Heart right ventricle (tissue), 16 donors: ENCODE measurements at regions of chr5 and their contacts with region 1.

Region 1: GRCh38 chr5:139690064-139690802 is 42.1 kb downstream of the CXXC5 start:
- DNase-seq: no peak
- ATAC-seq: peak in 7 of 8 donors; percentile 1 to 38 (median 32)
- H3K4me3 ChIP-seq: peak overlapping the region in 1 of 10 donors; percentile 5
- H3K27ac ChIP-seq: peak overlapping the region in 7 of 10 donors; percentile 5 to 73 (median 43)
- H3K4me1 ChIP-seq: peaks cover 17 to 85% (median 54%) of the 10 kb centered on the region in 9 donors
- H3K27me3 ChIP-seq: no peaks in the 10 kb centered on the region
- CTCF ChIP-seq: peak; percentile 22 to 79 (median 70)

Region 2: DNA sequence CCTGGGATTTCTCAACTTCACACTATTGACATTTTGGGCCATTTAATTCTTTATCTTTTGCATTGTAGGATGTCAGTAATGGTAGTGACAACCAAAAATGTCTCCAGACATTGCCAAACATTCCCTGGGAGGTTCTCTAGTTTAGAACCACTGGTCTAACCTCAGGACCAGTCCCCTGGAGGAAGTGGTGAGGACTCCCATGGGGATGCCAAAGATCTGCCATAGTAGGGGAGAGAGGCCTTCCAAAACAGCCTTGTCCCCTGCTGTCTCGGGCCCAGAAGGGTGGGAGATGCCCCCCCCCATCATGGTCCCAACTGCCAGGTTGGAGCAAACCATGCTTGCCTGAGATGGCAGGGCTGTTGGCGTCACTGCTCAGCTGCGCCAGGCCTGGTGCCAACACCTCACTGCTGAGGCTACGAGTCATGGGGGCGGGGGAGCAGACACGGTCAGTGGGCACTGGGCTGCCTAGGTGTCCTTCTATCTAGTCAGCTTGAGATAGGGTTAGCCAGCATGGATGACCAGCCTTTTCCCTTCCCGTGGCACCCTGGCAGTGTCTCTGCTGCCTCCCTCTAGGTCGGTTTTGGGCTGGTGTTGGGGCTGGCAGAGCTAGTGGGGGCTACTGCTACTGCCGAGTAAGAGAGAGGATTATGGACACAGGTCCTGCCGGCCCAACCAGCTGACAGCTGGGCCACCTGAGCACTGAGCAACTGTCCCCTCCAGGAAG is 50.5 kb before region 1 on chr5:
- intact Hi-C with region 1: loop called in 8 of 10 experiments (anchors 1 to 5 kb)
- DNase-seq: peak in 1 of 2 donors; percentile 58
- ATAC-seq: no peak
- H3K4me3 ChIP-seq: no peak overlapping the region
- H3K27ac ChIP-seq: peak overlapping the region in 1 of 10 donors; percentile 5
- H3K4me1 ChIP-seq: peaks cover 19 to 60% (median 45%) of the 10 kb centered on the region in 9 donors
- H3K27me3 ChIP-seq: no peaks in the 10 kb centered on the region
- CTCF ChIP-seq: no peak

Region 3: DNA sequence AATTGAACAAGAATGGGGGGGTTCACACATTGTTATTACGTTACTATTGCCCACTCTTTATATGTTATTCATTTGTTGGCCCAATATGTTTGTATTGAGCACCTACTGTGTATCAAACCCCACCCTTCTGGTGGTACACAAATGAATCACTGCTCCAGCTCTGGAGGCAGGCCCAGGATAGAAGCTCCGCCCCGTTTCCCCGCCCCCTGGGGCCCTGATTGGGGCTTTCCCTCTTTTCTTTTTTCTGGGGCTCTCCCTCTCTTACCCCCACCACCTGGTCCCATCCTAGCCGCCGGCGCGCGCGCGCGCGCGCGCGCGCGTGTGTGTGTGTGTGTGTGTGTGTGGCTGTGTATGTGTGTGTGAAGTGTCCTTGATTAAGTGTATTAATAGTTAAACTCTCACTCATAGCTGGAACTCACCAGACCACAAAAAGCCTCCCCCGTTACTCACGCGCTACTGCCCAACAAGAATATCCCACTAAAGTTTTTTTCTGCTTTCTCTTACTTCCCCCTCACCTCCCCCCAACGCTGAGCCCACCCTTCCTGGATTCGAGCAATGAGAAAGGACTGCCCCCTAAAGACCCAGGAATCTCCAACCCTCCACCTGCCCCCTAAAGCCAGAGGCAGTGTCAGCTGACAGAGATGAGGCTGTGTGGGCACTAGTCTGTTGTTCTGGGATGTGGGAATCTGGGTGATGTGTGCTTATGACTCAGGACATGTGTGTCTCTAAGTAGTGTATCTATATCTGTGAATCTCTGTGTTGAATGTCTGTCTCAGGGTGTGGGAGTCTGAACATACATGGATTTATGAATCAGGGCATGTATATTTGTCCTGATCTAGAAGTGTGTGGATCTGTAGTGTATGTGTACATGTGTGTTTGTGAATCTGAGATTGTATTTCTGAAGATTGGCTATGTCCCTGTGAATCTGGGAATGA is 38.1 kb before region 1 on chr5:
- intact Hi-C with region 1: loop called in 6 of 10 experiments (anchors 5 kb)
- DNase-seq: peak; percentile 78 to 81
- ATAC-seq: peak in 7 of 8 donors; percentile 9 to 46 (median 36)
- H3K4me3 ChIP-seq: peak overlapping the region in 6 of 10 donors; percentile 20 to 99 (median 96)
- H3K27ac ChIP-seq: peak overlapping the region; percentile 66 to 97 (median 92)
- H3K4me1 ChIP-seq: peaks cover 40 to 88% (median 79%) of the 10 kb centered on the region in 9 donors
- H3K27me3 ChIP-seq: peaks cover 0 to 48% (median 0%) of the 10 kb centered on the region in 7 donors
- CTCF ChIP-seq: no peak

Region 4: GRCh38 chr5:139745124-139745799 is 55.0 kb after region 1 on chr5:
- intact Hi-C with region 1: no loop called
- DNase-seq: peak in 1 of 2 donors; percentile 60
- ATAC-seq: peak in 6 of 8 donors; percentile 7 to 56 (median 27)
- H3K4me3 ChIP-seq: peak overlapping the region in 1 of 10 donors; percentile 51
- H3K27ac ChIP-seq: peak overlapping the region in 3 of 10 donors; percentile 15 to 64 (median 36)
- H3K4me1 ChIP-seq: peaks cover 8 to 43% (median 35%) of the 10 kb centered on the region in 9 donors
- H3K27me3 ChIP-seq: peaks cover 6 to 58% (median 30%) of the 10 kb centered on the region in 7 donors
- CTCF ChIP-seq: no peak